HCT116 (cell line): ENCODE measurements at regions of chr5 and their contacts with region 1.

Region 1: GRCh38 chr5:172437445-172438308 is 16.6 kb downstream of the SH3PXD2B start:
- DNase-seq: peak; percentile 8
- ATAC-seq: peak; percentile 55; the same call in 1 of the 2 replicates
- H3K4me3 ChIP-seq: no peak overlapping the region
- H3K27ac ChIP-seq: no peak overlapping the region
- H3K4me1 ChIP-seq: peaks cover 0 to 4% of the 10 kb centered on the region in 2 experiments; a peak in 1 of 4 replicates
- H3K27me3 ChIP-seq: no peaks in the 10 kb centered on the region
- CTCF ChIP-seq: no peak
- POLR2A ChIP-seq: no peak
- RAD21 ChIP-seq: no peak

Region 2: DNA sequence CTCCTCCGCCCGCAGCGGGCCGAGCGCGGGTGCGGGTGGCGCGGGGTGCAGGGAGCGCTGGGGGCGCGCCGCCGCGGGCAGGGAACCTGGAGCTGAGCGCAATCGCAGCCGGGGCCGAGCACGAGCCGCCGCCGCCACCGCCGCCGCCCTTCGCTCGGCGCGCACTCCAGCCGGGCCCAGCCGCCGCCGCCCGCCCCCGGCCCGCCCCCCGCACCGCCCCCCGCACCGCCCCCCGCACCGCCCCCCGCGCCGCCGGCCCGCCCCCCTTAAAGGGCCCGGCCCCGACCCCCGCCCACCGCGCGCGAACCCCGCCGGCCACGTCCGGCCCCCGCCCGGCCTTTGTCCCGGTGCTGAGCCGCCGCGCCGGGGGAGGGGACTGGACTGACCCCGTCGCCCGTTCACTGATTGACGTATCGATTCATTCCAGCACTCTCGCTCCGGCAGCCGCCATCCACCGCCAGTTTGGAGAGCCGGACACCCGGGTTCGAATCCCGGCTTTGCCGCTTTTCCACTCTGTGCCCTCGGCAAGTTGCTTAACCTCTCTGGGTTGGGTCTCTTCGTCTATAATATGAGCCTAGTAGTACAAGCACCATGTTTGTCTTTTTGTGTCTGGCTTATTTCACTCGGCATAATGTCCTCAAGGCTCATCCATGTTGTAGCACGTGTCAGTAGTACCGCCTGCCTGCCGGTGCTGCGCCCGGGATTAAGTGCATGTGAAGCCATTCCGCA is 16.8 kb after region 1 on chr5 and contains the start of gene SH3PXD2B:
- CTCF ChIA-PET with region 1: interaction called, 22 read pairs
- POLR2A ChIA-PET with region 1: no interaction called
- RAD21 ChIA-PET with region 1: no interaction called
- intact Hi-C with region 1: no loop called
- DNase-seq: no peak
- ATAC-seq: peak; percentile 66
- H3K4me3 ChIP-seq: peak within 1 kb of the TSS; percentile 68 to 94
- H3K27ac ChIP-seq: peak within 1 kb of the TSS; percentile 60
- H3K4me1 ChIP-seq: peaks cover 12 to 44% of the 10 kb centered on the region in 2 experiments
- H3K27me3 ChIP-seq: no peaks in the 10 kb centered on the region
- CTCF ChIP-seq: no peak
- POLR2A ChIP-seq: peak; percentile 39
- RAD21 ChIP-seq: no peak
- total RNA-seq, gene SH3PXD2B: 27.5 TPM